Heart right ventricle (tissue), 16 donors: ENCODE measurements at regions of chr16 and their contacts with region 1.

Region 1: DNA sequence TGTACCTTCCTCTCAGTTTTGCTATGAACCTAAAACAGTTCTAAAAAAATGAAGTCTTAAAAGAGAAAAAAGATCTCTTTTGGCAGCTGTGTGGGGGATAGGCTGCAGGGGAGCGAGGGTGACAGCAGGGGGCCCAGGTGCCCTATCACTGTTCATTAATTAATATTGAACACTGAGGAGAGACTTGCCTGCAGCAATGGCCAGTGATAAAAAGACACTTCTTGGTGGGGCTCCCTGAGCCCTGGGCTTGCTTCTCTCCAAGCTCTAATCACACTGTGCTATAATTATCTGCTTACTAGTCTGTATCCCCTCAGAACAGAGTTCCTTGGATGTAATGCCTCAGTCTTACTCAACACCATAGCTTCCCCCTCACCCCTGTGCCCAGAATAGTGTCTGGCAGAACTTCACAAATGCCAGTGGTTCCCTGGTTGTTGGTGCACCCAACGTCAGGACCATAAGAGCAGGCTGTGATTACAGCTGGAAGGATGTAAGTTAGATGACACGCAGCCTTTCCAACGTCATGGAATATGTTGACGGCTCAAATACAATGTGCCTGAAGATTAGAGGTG is 52.0 kb upstream of the IRX6 start:
- DNase-seq: peak; percentile 19 to 27
- ATAC-seq: peak; percentile 17 to 97 (median 94)
- H3K4me3 ChIP-seq: no peak overlapping the region
- H3K27ac ChIP-seq: peak overlapping the region in 3 of 10 donors; percentile 55 to 71 (median 64)
- H3K4me1 ChIP-seq: peaks cover 0 to 6% (median 0%) of the 10 kb centered on the region in 9 donors
- H3K27me3 ChIP-seq: no peaks in the 10 kb centered on the region
- CTCF ChIP-seq: no peak

Region 2: GRCh38 chr16:55389426-55390073 is 117.5 kb after region 1 on chr16:
- intact Hi-C with region 1: loop called in 1 of 10 experiments (anchors 1 kb)
- DNase-seq: peak; percentile 49 to 56
- ATAC-seq: peak; percentile 52 to 87 (median 67)
- H3K4me3 ChIP-seq: peak overlapping the region in 2 of 10 donors; percentile 11 to 23
- H3K27ac ChIP-seq: peak overlapping the region; percentile 31 to 94 (median 78)
- H3K4me1 ChIP-seq: peaks cover 0 to 58% (median 14%) of the 10 kb centered on the region in 9 donors
- H3K27me3 ChIP-seq: no peaks in the 10 kb centered on the region
- CTCF ChIP-seq: no peak